Left ventricle myocardium inferior (tissue), 1 donor: ENCODE measurements at regions of chr15 and their contacts with region 1.

Region 1: DNA sequence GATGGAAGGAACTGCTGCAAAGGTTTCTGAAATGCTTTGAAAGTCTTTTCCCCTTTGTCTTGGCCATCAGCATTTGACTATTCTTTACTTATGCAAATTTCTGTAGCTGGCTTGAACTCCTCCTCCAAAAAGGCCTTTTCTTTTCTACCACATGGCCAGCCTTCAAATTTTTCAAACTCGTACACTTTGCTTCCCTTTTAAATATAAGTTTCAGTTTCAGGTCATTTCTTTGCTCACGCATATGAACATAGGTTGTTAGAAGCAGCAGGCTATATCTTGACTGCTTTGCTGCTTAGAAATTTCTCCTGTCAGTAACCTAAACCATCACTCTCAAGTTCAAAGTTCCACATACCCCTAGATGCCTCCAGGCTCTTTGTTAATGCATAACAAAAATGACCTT is 62.4 kb downstream of the GALK2 start:
- DNase-seq: no peak
- H3K4me3 ChIP-seq: no peak overlapping the region
- H3K27ac ChIP-seq: no peak overlapping the region
- H3K4me1 ChIP-seq: peaks cover 33% of the 10 kb centered on the region
- H3K27me3 ChIP-seq: no peaks in the 10 kb centered on the region
- CTCF ChIP-seq: no peak

Region 2: DNA sequence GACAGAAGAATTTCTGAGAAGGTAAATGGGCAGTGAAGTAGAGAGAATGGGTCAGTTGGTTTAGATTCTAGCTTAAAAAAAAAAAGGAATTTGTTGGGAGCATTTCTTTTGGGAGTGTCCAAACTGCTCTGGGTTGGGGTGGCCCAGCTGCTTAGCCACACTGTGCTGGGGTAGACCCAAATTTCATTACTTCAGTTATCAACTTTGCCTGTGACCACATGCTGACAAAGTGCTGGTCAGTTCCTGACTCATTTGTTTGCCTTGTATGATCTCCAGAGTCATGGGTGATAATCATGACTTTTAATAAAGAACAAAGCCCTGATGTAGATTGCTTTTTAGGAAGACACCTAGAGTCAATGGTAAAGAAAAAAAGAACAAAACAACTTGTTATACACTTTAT is 69.2 kb after region 1 on chr15:
- intact Hi-C with region 1: no loop called
- DNase-seq: no peak
- H3K4me3 ChIP-seq: no peak overlapping the region
- H3K27ac ChIP-seq: no peak overlapping the region
- H3K4me1 ChIP-seq: no peaks in the 10 kb centered on the region
- H3K27me3 ChIP-seq: no peaks in the 10 kb centered on the region
- CTCF ChIP-seq: no peak

Region 3: DNA sequence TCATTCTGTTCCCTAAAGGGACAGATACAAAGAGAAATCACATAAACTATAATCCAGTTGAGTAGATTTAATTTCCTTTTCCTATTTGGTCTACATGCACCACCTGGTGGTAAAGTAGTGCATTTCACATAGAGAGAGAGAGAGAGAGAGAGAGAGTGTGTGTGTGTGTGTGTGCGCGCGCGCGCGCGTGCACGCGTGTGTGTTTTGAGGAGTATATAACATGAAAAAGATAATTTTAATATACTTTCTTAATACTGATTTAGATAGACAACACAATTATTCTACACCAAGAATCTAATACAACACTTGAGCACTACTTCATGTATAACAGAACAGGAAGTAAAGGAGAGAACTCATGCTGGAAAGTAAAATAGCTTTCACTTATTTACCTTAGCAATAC is 189.6 kb after region 1 on chr15:
- intact Hi-C with region 1: loop called (anchors 5 kb)
- DNase-seq: peak; percentile 30
- H3K4me3 ChIP-seq: peak overlapping the region; percentile 67
- H3K27ac ChIP-seq: peak overlapping the region; percentile 81
- H3K4me1 ChIP-seq: peaks cover 10% of the 10 kb centered on the region
- H3K27me3 ChIP-seq: no peaks in the 10 kb centered on the region
- CTCF ChIP-seq: peak; percentile 87